Thyroid gland (tissue), 4 donors: ENCODE measurements at regions of chr7 and their contacts with region 1.

Region 1: DNA sequence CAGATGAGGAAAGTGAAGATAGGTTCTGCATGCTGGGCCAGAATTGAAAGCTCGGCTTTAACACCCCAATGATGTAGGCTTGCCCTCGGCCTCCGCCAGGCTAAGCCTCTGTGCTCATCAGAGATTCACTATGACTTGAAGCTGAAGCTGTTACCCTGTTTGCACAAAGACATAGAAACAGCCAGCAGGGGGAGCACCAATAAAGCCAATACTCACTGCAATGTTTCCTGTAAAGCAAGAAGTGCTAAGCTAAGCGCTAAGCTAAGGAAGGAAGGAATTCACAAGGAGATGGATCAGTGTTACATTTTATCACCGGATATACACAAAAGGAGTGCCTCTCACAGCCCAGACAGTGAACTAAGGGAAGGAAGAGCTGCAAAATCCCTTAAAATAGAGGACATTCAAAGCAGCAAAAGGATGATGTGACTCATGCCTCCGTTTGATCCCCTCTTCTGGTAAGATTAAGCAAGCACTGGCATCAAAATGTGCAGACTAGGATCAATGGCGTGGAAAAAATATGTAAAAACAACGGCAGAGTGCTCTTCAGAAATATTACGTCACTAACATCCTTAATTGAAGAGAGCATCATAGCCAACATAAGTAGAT is 153.8 kb downstream of the COBL start:
- DNase-seq: peak; percentile 80 to 86
- H3K4me3 ChIP-seq: no peak overlapping the region
- H3K27ac ChIP-seq: no peak overlapping the region
- H3K4me1 ChIP-seq: no peaks in the 10 kb centered on the region
- H3K27me3 ChIP-seq: no peaks in the 10 kb centered on the region
- CTCF ChIP-seq: peak in 5 of 6 experiments; percentile 65 to 92 (median 78)
- POLR2A ChIP-seq: no peak

Region 2: GRCh38 chr7:51357821-51358220 is 195.0 kb after region 1 on chr7:
- intact Hi-C with region 1: loop called (anchors 5 kb)
- DNase-seq: no peak
- H3K4me3 ChIP-seq: no peak overlapping the region
- H3K27ac ChIP-seq: no peak overlapping the region
- H3K4me1 ChIP-seq: no peaks in the 10 kb centered on the region
- H3K27me3 ChIP-seq: no peaks in the 10 kb centered on the region
- CTCF ChIP-seq: peak in 1 of 6 experiments; percentile 7
- POLR2A ChIP-seq: no peak

Region 3: GRCh38 chr7:51366930-51367613 is 204.2 kb after region 1 on chr7:
- intact Hi-C with region 1: loop called (anchors 5 kb)
- DNase-seq: peak; percentile 26 to 40
- H3K4me3 ChIP-seq: no peak overlapping the region
- H3K27ac ChIP-seq: no peak overlapping the region
- H3K4me1 ChIP-seq: no peaks in the 10 kb centered on the region
- H3K27me3 ChIP-seq: no peaks in the 10 kb centered on the region
- CTCF ChIP-seq: peak; percentile 20 to 83 (median 68)
- POLR2A ChIP-seq: no peak